ENCODE measurements at regions of chr16 and their contacts with region 1.

Region 1: GRCh38 chr16:30609926-30610839 is at the start of gene ZNF689:
- H3K4me3 ChIP-seq: peak within 1 kb of the TSS; percentile 81
- H3K27ac ChIP-seq: peak within 1 kb of the TSS; percentile 96
- H3K4me1 ChIP-seq: no peaks in the 10 kb centered on the region
- CTCF ChIP-seq: peak; percentile 78

Region 2: GRCh38 chr16:30417529-30418349 is 192.4 kb before region 1 on chr16:
- CTCF ChIA-PET with region 1: interaction called, 9 read pairs
- POLR2A ChIA-PET with region 1: interaction called, 13 read pairs
- H3K4me3 ChIP-seq: peak overlapping the region; percentile 37
- H3K27ac ChIP-seq: peak overlapping the region; percentile 85
- H3K4me1 ChIP-seq: peaks cover 12% of the 10 kb centered on the region
- CTCF ChIP-seq: peak; percentile 89

Region 3: DNA sequence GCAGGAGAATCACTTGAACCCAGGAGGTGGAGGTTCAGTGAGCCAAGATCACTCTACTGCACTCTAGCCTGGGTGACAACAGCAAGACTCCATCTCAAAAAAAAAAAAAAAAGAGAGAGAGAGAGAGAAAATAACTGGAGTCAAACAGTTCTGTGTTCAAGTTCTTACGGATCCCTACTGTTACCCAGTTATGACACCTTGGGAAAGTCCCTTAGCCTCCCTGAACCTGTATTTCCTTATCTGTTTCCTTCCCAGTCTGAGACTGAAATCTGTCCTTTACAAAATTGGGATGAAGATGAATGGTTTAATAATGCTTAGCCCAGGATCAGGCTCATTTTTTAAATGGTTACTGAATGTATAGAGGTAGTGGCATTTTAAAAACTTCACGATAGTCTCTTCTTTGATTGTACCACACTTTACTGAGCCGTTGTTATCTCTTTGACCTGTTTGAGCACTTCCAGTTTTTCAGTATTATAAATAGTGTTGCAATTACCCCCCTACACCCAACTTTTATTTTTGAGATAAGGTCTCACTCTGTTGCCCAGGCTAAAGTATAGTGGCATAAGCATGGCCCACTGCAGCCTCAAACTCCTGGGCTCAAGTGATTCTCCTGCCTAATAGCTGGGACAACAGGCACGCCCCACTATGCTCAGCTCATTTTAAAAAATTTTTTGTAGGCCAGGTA is 101.0 kb before region 1 on chr16:
- CTCF ChIA-PET with region 1: no interaction called
- POLR2A ChIA-PET with region 1: no interaction called
- H3K4me3 ChIP-seq: no peak overlapping the region
- H3K27ac ChIP-seq: no peak overlapping the region
- H3K4me1 ChIP-seq: no peaks in the 10 kb centered on the region
- CTCF ChIP-seq: no peak

Region 4: DNA sequence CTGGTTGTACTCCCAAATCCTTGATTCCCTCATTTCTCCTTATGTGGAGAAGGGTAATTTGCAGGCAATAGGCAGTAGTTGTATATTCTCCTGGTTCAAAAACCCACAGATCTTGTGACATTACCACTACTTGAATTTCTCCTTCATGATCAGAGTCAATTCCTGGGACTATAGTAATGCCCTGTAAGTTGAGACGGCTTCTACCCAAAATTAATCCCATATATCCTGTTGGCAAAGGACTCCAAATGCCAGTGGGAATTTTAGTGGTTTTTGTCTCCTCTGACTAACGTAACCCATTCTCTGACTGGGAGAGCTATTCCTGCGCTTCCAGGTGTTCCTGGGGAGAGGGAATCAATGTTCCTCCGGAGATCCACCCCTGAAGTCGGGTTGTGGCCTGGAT is 11.6 kb after region 1 on chr16:
- CTCF ChIA-PET with region 1: interaction called, 79 read pairs
- POLR2A ChIA-PET with region 1: interaction called, 12 read pairs
- H3K4me3 ChIP-seq: no peak overlapping the region
- H3K27ac ChIP-seq: no peak overlapping the region
- H3K4me1 ChIP-seq: no peaks in the 10 kb centered on the region
- CTCF ChIP-seq: no peak

Region 5: DNA sequence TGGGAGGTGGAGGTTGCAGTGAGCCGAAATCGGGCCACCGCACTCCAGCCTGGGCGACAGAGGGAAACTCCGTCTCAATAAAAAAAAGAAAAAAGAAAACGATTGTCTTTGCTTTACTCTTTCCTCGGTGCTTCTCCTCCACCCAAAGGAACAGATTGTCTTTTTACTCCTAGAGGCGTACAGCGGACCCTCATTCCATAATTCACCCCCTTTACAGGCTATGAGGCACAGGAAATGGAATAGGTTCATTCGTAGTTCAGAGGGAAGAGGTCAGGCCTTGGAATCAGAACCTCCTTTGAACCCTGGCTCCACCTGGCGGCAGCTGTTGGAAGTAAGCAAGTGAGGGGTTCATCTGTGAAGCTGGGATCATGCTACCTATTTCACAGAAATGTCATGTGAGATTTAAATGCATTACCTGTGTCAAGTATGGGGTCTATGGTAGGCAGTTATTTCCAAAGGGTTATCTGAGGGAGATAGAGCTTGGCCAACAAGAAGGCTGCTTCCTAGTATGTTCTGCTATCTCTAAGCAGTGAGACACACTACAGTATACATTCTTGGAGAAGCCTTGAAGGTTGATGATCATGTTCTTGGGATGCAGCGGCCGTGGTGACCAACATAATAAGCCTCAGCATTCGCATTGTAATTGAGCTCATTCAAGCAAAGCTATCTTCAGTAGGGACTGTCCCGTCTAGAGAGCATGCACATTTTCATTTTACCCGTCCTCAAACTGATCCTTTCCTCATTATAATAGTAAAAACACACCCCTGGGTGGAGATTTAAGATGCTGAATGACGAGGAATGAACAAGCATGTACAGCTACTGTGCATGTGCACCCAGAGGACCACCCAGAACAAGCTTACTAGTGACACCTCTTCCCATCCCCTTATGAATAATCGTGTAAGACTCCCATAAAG is 18.7 kb after region 1 on chr16:
- CTCF ChIA-PET with region 1: interaction called, 79 read pairs
- POLR2A ChIA-PET with region 1: interaction called, 7 read pairs
- H3K4me3 ChIP-seq: no peak overlapping the region
- H3K27ac ChIP-seq: no peak overlapping the region
- H3K4me1 ChIP-seq: no peaks in the 10 kb centered on the region
- CTCF ChIP-seq: peak; percentile 83

Region 6: GRCh38 chr16:30747799-30748634 is 137.8 kb after region 1 on chr16 and contains the start of gene PHKG2:
- CTCF ChIA-PET with region 1: no interaction called
- POLR2A ChIA-PET with region 1: no interaction called
- H3K4me3 ChIP-seq: peak within 1 kb of the TSS; percentile 87
- H3K27ac ChIP-seq: peak within 1 kb of the TSS; percentile 48
- H3K4me1 ChIP-seq: peaks cover 3% of the 10 kb centered on the region; the same call in 1 of the 2 replicates
- CTCF ChIP-seq: peak; percentile 10; the same call in 1 of the 2 replicates